Caco-2 (cell line): ENCODE measurements at regions of chr7 and their contacts with region 1.

Region 1: DNA sequence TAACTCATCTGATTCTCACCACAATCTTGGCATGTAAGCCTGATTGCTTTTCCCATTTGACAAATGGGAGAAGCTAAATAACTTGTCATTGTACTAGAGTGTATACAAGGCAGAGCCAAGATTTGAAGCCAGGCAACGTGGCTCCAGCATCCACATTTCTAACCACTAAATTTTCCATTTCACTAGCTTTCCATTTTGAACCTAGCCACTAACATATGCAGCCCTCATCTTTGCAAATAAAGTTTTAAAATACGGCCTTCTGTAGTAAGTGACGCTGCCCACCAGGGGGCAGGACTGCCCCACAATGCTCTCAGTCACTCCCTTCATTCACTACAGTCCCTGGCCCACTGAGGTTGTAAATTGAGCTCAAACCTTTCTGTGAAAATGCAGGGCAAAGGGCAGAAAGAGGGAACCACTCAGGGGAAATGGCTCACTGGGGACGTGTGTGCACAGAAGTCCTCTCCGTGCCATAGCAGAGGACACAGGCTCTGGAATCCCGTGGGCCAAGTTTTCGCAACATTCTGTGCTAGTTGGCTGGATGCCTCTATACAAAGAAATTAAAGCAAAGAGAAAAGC is 315.7 kb downstream of the TNS3 start:
- DNase-seq: peak; percentile 82 to 85
- H3K4me3 ChIP-seq: no peak overlapping the region
- H3K4me3 Mint-ChIP-seq: no peak overlapping the region
- H3K27ac Mint-ChIP-seq: peak overlapping the region; percentile 31
- H3K4me1 ChIP-seq: peaks cover 25% of the 10 kb centered on the region
- H3K4me1 Mint-ChIP-seq: peaks cover 17% of the 10 kb centered on the region
- H3K27me3 ChIP-seq: no peaks in the 10 kb centered on the region
- H3K27me3 Mint-ChIP-seq: no peaks in the 10 kb centered on the region
- CTCF ChIP-seq: peak; percentile 89 to 96

Region 2: GRCh38 chr7:47327698-47328391 is 61.6 kb after region 1 on chr7:
- CTCF ChIA-PET with region 1: interaction called, 19 read pairs
- POLR2A ChIA-PET with region 1: no interaction called
- intact Hi-C with region 1: loop called (anchors 1 kb)
- DNase-seq: no peak
- H3K4me3 ChIP-seq: no peak overlapping the region
- H3K4me3 Mint-ChIP-seq: peak overlapping the region; percentile 17
- H3K27ac Mint-ChIP-seq: peak overlapping the region; percentile 56
- H3K4me1 ChIP-seq: peaks cover 43% of the 10 kb centered on the region
- H3K4me1 Mint-ChIP-seq: peaks cover 44% of the 10 kb centered on the region
- H3K27me3 ChIP-seq: no peaks in the 10 kb centered on the region
- H3K27me3 Mint-ChIP-seq: no peaks in the 10 kb centered on the region
- CTCF ChIP-seq: no peak

Region 3: DNA sequence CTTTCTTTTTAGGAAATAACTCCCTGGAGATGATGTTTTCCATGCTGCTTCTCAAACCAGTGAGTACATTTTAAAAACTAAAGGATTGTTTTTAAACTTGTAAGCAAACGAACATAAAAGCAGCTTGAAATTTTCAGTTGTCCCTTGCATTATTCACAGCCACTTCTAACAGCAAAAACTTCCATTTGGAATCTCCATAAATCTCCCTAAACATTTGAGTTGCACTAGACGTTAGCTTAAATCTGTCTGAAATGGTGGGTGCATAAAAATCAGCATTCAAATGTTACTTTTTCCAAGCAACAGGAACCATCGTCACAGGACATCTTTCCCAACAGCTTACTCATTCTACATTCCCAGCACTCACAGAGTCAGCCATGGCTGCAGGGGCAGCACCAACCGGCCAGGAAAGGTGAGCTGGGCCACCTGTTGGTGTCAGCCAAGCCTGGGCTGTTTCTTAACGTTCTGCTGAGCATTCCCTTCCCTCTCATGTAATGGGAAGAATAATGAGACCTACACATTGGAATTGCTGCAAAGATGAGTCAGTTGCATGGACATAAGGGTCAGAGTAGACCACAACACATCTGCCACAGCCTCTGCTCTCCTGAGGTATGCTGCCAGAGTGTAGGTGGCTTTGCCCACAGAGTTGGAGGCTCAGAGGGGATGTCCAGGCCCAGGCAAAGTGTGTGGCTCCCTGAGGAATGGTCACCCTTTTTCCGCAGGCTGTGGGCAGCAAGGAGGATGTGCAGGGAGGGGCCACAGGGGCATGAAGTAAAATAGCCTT is 152.6 kb after region 1 on chr7:
- CTCF ChIA-PET with region 1: interaction called, 5 read pairs
- POLR2A ChIA-PET with region 1: no interaction called
- intact Hi-C with region 1: loop called (anchors 10 kb)
- DNase-seq: peak in 1 of 2 experiments; percentile 12
- H3K4me3 ChIP-seq: no peak overlapping the region
- H3K4me3 Mint-ChIP-seq: no peak overlapping the region
- H3K27ac Mint-ChIP-seq: peak overlapping the region; percentile 31
- H3K4me1 ChIP-seq: no peaks in the 10 kb centered on the region
- H3K4me1 Mint-ChIP-seq: no peaks in the 10 kb centered on the region
- H3K27me3 ChIP-seq: no peaks in the 10 kb centered on the region
- H3K27me3 Mint-ChIP-seq: no peaks in the 10 kb centered on the region
- CTCF ChIP-seq: no peak

Region 4: GRCh38 chr7:47937711-47938573 is 671.7 kb after region 1 on chr7:
- CTCF ChIA-PET with region 1: interaction called, 10 read pairs
- POLR2A ChIA-PET with region 1: no interaction called
- intact Hi-C with region 1: loop called (anchors 1 kb)
- DNase-seq: no peak
- H3K4me3 ChIP-seq: no peak overlapping the region
- H3K4me3 Mint-ChIP-seq: no peak overlapping the region
- H3K27ac Mint-ChIP-seq: no peak overlapping the region
- H3K4me1 ChIP-seq: no peaks in the 10 kb centered on the region
- H3K4me1 Mint-ChIP-seq: peaks cover 7% of the 10 kb centered on the region
- H3K27me3 ChIP-seq: no peaks in the 10 kb centered on the region
- H3K27me3 Mint-ChIP-seq: no peaks in the 10 kb centered on the region
- CTCF ChIP-seq: no peak

Region 5: DNA sequence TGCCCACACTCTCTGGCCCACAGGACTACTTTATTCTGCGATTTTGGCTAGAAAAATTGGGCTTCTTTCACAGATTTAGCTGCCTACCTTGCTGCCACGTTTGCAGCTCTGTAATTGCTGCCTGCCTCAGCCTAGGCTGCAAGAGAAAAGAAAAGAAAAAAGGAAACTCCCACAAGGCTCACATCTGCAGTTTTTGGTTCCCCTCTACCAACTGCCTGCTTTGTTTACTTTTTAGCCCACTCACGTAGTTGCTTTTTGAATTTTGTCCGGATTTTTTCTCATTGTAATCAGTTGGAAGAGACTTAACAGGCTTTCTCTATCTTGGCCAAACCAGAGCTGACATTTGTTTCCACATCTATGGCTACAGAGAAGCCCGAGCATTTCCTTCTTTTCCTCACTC is 738.4 kb after region 1 on chr7:
- CTCF ChIA-PET with region 1: no interaction called
- POLR2A ChIA-PET with region 1: interaction called, 15 read pairs
- intact Hi-C with region 1: no loop called
- DNase-seq: no peak
- H3K4me3 ChIP-seq: no peak overlapping the region
- H3K4me3 Mint-ChIP-seq: no peak overlapping the region
- H3K27ac Mint-ChIP-seq: no peak overlapping the region
- H3K4me1 ChIP-seq: no peaks in the 10 kb centered on the region
- H3K4me1 Mint-ChIP-seq: peaks cover 15% of the 10 kb centered on the region
- H3K27me3 ChIP-seq: no peaks in the 10 kb centered on the region
- H3K27me3 Mint-ChIP-seq: peaks cover 2% of the 10 kb centered on the region
- CTCF ChIP-seq: no peak